PC-9 (cell line): ENCODE measurements at regions of chr13 and their contacts with region 1.

Region 1: GRCh38 chr13:99269627-99270241 is 11.6 kb upstream of the GPR18 start:
- DNase-seq: no peak
- H3K4me3 ChIP-seq: no peak overlapping the region
- H3K27ac ChIP-seq: no peak overlapping the region
- H3K4me1 ChIP-seq: no peaks in the 10 kb centered on the region
- H3K27me3 ChIP-seq: no peaks in the 10 kb centered on the region
- CTCF ChIP-seq: peak; percentile 64

Region 2: DNA sequence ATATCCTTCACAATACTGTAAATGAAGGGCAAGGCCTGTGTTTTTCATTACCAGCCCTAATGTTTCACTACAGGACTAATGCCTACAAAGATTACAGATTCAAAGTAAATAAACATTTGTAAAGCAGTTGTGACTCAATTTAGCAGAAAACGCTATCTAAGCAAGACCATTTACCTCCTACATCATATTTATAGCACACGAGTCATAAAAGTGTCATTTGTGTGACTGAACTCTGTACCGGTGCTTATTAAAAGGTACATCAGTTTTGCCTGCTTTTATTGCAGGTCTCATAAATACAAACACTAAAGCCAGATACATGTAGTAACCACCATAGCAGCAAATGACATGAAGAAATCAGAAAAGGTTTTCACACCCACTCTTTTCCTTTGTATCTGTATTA is 455.7 kb before region 1 on chr13:
- CTCF ChIA-PET with region 1: interaction called, 10 read pairs
- POLR2A ChIA-PET with region 1: no interaction called
- intact Hi-C with region 1: no loop called
- DNase-seq: no peak
- H3K4me3 ChIP-seq: no peak overlapping the region
- H3K27ac ChIP-seq: no peak overlapping the region
- H3K4me1 ChIP-seq: no peaks in the 10 kb centered on the region
- H3K27me3 ChIP-seq: no peaks in the 10 kb centered on the region
- CTCF ChIP-seq: no peak

Region 3: GRCh38 chr13:99041788-99042187 is 227.9 kb before region 1 on chr13:
- CTCF ChIA-PET with region 1: interaction called, 5 read pairs
- POLR2A ChIA-PET with region 1: no interaction called
- intact Hi-C with region 1: loop called (anchors 10 kb)
- DNase-seq: no peak
- H3K4me3 ChIP-seq: no peak overlapping the region
- H3K27ac ChIP-seq: peak overlapping the region; percentile 62; the same call in 1 of the 2 replicates
- H3K4me1 ChIP-seq: peaks cover 70% of the 10 kb centered on the region
- H3K27me3 ChIP-seq: no peaks in the 10 kb centered on the region
- CTCF ChIP-seq: no peak

Region 4: GRCh38 chr13:99176309-99177276 is 93.1 kb before region 1 on chr13:
- CTCF ChIA-PET with region 1: interaction called, 8 read pairs
- POLR2A ChIA-PET with region 1: no interaction called
- intact Hi-C with region 1: loop called (anchors 1 kb)
- DNase-seq: peak; percentile 67 to 76
- H3K4me3 ChIP-seq: peak overlapping the region; percentile 47; the same call in 1 of the 2 replicates
- H3K27ac ChIP-seq: no peak overlapping the region
- H3K4me1 ChIP-seq: peaks cover 8% of the 10 kb centered on the region; the same call in 1 of the 2 replicates
- H3K27me3 ChIP-seq: no peaks in the 10 kb centered on the region
- CTCF ChIP-seq: peak; percentile 97

Region 5: GRCh38 chr13:99436686-99437416 is 167.1 kb after region 1 on chr13:
- CTCF ChIA-PET with region 1: interaction called, 4 read pairs
- POLR2A ChIA-PET with region 1: no interaction called
- intact Hi-C with region 1: loop called (anchors 1 kb)
- DNase-seq: peak; percentile 73 to 75
- H3K4me3 ChIP-seq: no peak overlapping the region; the same call in 1 of the 2 replicates
- H3K27ac ChIP-seq: no peak overlapping the region
- H3K4me1 ChIP-seq: peaks cover 43% of the 10 kb centered on the region
- H3K27me3 ChIP-seq: no peaks in the 10 kb centered on the region
- CTCF ChIP-seq: peak; percentile 100